Right lobe of liver (tissue), 6 donors: ENCODE measurements at regions of chr3 and their contacts with region 1.

Region 1: GRCh38 chr3:113495035-113495434 is 19.9 kb downstream of the SPICE1 start:
- DNase-seq: peak in 1 of 3 donors; percentile 52
- ATAC-seq: peak; percentile 79 to 95 (median 88)
- H3K4me3 ChIP-seq: no peak overlapping the region
- H3K27ac ChIP-seq: peak overlapping the region in 1 of 3 donors; percentile 3
- H3K4me1 ChIP-seq: no peaks in the 10 kb centered on the region
- H3K27me3 ChIP-seq: no peaks in the 10 kb centered on the region
- CTCF ChIP-seq: peak; percentile 62 to 65 (median 62)
- POLR2A ChIP-seq: no peak

Region 2: GRCh38 chr3:113339616-113340244 is 155.3 kb before region 1 on chr3:
- intact Hi-C with region 1: no loop called
- DNase-seq: no peak
- ATAC-seq: no peak
- H3K4me3 ChIP-seq: no peak overlapping the region
- H3K27ac ChIP-seq: no peak overlapping the region
- H3K4me1 ChIP-seq: no peaks in the 10 kb centered on the region
- H3K27me3 ChIP-seq: no peaks in the 10 kb centered on the region
- CTCF ChIP-seq: peak in 1 of 4 donors; percentile 16
- POLR2A ChIP-seq: no peak

Region 3: GRCh38 chr3:113575206-113575605 is 80.2 kb after region 1 on chr3:
- intact Hi-C with region 1: loop called in 1 of 2 experiments (anchors 10 kb)
- DNase-seq: no peak
- ATAC-seq: no peak
- H3K4me3 ChIP-seq: no peak overlapping the region
- H3K27ac ChIP-seq: no peak overlapping the region
- H3K4me1 ChIP-seq: no peaks in the 10 kb centered on the region
- H3K27me3 ChIP-seq: no peaks in the 10 kb centered on the region
- CTCF ChIP-seq: no peak
- POLR2A ChIP-seq: no peak